ENCODE measurements at regions of chr16 and their contacts with region 1.

Region 1: DNA sequence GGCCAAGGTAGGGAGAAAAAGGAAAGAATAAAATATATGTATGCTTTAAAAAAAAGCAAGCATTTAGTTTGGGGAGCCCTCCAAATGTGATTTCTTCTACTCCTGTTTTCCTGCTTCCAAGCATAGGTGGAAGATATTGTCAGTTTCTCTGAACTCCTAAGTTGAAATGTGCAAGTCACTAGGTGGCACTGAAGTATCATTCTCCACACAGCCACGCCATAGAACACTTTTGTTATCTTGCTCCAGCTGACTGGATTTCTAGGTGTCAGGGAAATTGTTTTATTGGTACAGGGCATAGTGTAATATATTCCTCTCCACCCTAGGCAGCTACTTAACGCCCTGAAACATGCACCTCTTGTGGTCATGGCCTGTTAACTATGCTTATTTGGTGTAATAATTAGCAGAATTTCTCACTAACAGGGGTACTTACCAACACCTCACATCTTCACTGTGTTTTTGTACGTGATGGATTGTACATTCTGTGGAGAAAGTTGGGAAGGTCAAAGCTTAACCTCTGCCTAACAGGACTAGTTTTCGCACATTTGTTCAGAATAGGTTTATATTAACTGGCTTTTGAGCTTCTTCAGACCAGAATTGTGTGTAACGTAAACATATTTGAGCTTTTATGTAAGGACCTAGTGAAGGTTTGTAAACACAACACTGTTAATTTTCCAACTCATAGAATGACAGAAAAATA is 69.3 kb downstream of the FTO start:
- DNase-seq: no peak
- H3K4me3 ChIP-seq: no peak overlapping the region
- H3K27ac ChIP-seq: peak overlapping the region in 1 of 4 donors; percentile 6
- H3K4me1 ChIP-seq: peaks cover 15 to 93% (median 38%) of the 10 kb centered on the region in 3 donors
- H3K27me3 ChIP-seq: no peaks in the 10 kb centered on the region
- CTCF ChIP-seq: peak; percentile 18 to 67 (median 45)
- POLR2A ChIP-seq: no peak

Region 2: GRCh38 chr16:53703590-53704444 is 69.5 kb before region 1 on chr16 and contains the starts of genes FTO and RPGRIP1L:
- intact Hi-C with region 1: no loop called
- DNase-seq: peak; percentile 81
- H3K4me3 ChIP-seq: peak within 1 kb of the TSS; percentile 61 to 92 (median 76)
- H3K27ac ChIP-seq: peak within 1 kb of the TSS; percentile 76 to 85 (median 78)
- H3K4me1 ChIP-seq: peaks cover 10 to 27% (median 17%) of the 10 kb centered on the region in 3 donors
- H3K27me3 ChIP-seq: no peaks in the 10 kb centered on the region
- CTCF ChIP-seq: peak in 5 of 6 experiments; percentile 9 to 42 (median 28)
- POLR2A ChIP-seq: peak in 1 of 4 donors; percentile 38
- total RNA-seq, gene FTO: 29.0 to 64.1 (median 48.1) TPM
- total RNA-seq, gene RPGRIP1L: 1.2 to 3.9 (median 3.7) TPM

Region 3: DNA sequence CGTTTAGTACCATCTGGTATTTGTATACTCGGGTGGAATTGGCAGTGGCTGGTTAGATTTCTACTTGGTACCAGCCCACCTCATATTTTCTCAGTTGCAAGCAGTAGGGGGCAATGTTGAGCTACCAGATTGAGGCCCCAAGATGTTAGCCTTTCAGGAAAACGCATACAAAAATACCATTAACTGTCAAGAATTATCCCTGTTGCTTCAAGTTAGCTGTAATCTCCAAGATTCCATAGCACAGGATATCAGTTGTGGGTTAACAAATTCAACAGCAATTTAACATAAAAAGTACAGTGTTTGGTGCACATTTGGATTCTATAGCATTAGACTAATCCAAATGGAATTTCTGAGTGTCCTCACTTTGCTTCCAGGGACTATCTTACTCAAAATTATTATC is 118.9 kb after region 1 on chr16:
- intact Hi-C with region 1: loop called (anchors 10 kb)
- DNase-seq: no peak
- H3K4me3 ChIP-seq: no peak overlapping the region
- H3K27ac ChIP-seq: no peak overlapping the region
- H3K4me1 ChIP-seq: peaks cover 0 to 45% (median 15%) of the 10 kb centered on the region in 3 donors
- H3K27me3 ChIP-seq: no peaks in the 10 kb centered on the region
- CTCF ChIP-seq: peak in 5 of 6 experiments; percentile 52 to 76 (median 69)
- POLR2A ChIP-seq: no peak

Region 4: GRCh38 chr16:53905028-53905427 is 131.7 kb after region 1 on chr16:
- intact Hi-C with region 1: no loop called
- DNase-seq: no peak
- H3K4me3 ChIP-seq: no peak overlapping the region
- H3K27ac ChIP-seq: no peak overlapping the region
- H3K4me1 ChIP-seq: peaks cover 0 to 10% (median 0%) of the 10 kb centered on the region in 3 donors
- H3K27me3 ChIP-seq: no peaks in the 10 kb centered on the region
- CTCF ChIP-seq: no peak
- POLR2A ChIP-seq: no peak

Measured in esophagus squamous epithelium (tissue), 5 donors.